ENCODE measurements at regions of chr13 and their contacts with region 1.

Region 1: GRCh38 chr13:108508263-108508662 is 121.1 kb upstream of the MYO16 start:
- DNase-seq: no peak
- ATAC-seq: no peak
- H3K4me3 ChIP-seq: no peak overlapping the region
- H3K27ac ChIP-seq: no peak overlapping the region
- H3K4me1 ChIP-seq: no peaks in the 10 kb centered on the region
- H3K27me3 ChIP-seq: no peaks in the 10 kb centered on the region

Region 2: GRCh38 chr13:108322206-108322824 is 185.9 kb before region 1 on chr13:
- intact Hi-C with region 1: loop called in 1 of 2 experiments (anchors 5 kb)
- DNase-seq: no peak
- ATAC-seq: no peak
- H3K4me3 ChIP-seq: no peak overlapping the region
- H3K27ac ChIP-seq: no peak overlapping the region
- H3K4me1 ChIP-seq: no peaks in the 10 kb centered on the region
- H3K27me3 ChIP-seq: no peaks in the 10 kb centered on the region

Region 3: GRCh38 chr13:108342369-108343289 is 165.6 kb before region 1 on chr13:
- intact Hi-C with region 1: loop called in 1 of 2 experiments (anchors 5 kb)
- DNase-seq: no peak
- ATAC-seq: peak; percentile 65
- H3K4me3 ChIP-seq: no peak overlapping the region
- H3K27ac ChIP-seq: no peak overlapping the region
- H3K4me1 ChIP-seq: no peaks in the 10 kb centered on the region
- H3K27me3 ChIP-seq: no peaks in the 10 kb centered on the region